ENCODE measurements at regions of chrX and their contacts with region 1.

Region 1: GRCh38 chrX:103686199-103687072 is at the start of gene MORF4L2:
- DNase-seq: peak; percentile 69 to 96 (median 84)
- ATAC-seq: peak; percentile 81
- H3K4me3 ChIP-seq: peak within 1 kb of the TSS; percentile 88 to 90
- H3K4me3 Mint-ChIP-seq: peak within 1 kb of the TSS; percentile 80
- H3K27ac ChIP-seq: peak within 1 kb of the TSS; percentile 99 to 100
- H3K27ac Mint-ChIP-seq: peak within 1 kb of the TSS; percentile 76
- H3K4me1 ChIP-seq: peaks cover 18% of the 10 kb centered on the region
- H3K4me1 Mint-ChIP-seq: peaks cover 19% of the 10 kb centered on the region
- H3K27me3 ChIP-seq: no peaks in the 10 kb centered on the region
- H3K27me3 Mint-ChIP-seq: no peaks in the 10 kb centered on the region
- CTCF ChIP-seq: no peak
- total RNA-seq, gene MORF4L2: 203 to 204 TPM

Region 2: GRCh38 chrX:103214870-103215424 is 471.5 kb before region 1 on chrX and contains the start of gene BEX4:
- CTCF ChIA-PET with region 1: no interaction called
- POLR2A ChIA-PET with region 1: no interaction called
- intact Hi-C with region 1: loop called in 1 of 2 experiments (anchors 5 kb)
- DNase-seq: peak; percentile 68 to 89 (median 80)
- ATAC-seq: peak; percentile 90
- H3K4me3 ChIP-seq: peak within 1 kb of the TSS; percentile 63 to 68
- H3K4me3 Mint-ChIP-seq: peak within 1 kb of the TSS; percentile 87
- H3K27ac ChIP-seq: peak within 1 kb of the TSS; percentile 84 to 96
- H3K27ac Mint-ChIP-seq: peak within 1 kb of the TSS; percentile 93
- H3K4me1 ChIP-seq: peaks cover 8% of the 10 kb centered on the region
- H3K4me1 Mint-ChIP-seq: peaks cover 16% of the 10 kb centered on the region
- H3K27me3 ChIP-seq: no peaks in the 10 kb centered on the region
- H3K27me3 Mint-ChIP-seq: no peaks in the 10 kb centered on the region
- CTCF ChIP-seq: no peak
- total RNA-seq, gene BEX4: 50.6 to 54.3 TPM

Region 3: GRCh38 chrX:103310542-103311398 is 375.7 kb before region 1 on chrX and contains the start of gene BEX2:
- CTCF ChIA-PET with region 1: no interaction called
- POLR2A ChIA-PET with region 1: no interaction called
- intact Hi-C with region 1: loop called (anchors 5 to 10 kb)
- DNase-seq: peak; percentile 70 to 91 (median 82)
- ATAC-seq: peak; percentile 98
- H3K4me3 ChIP-seq: peak within 1 kb of the TSS; percentile 55 to 84
- H3K4me3 Mint-ChIP-seq: peak within 1 kb of the TSS; percentile 85
- H3K27ac ChIP-seq: peak within 1 kb of the TSS; percentile 69 to 91
- H3K27ac Mint-ChIP-seq: peak within 1 kb of the TSS; percentile 86
- H3K4me1 ChIP-seq: no peaks in the 10 kb centered on the region
- H3K4me1 Mint-ChIP-seq: peaks cover 8% of the 10 kb centered on the region
- H3K27me3 ChIP-seq: no peaks in the 10 kb centered on the region
- H3K27me3 Mint-ChIP-seq: no peaks in the 10 kb centered on the region
- CTCF ChIP-seq: no peak
- total RNA-seq, gene BEX2: 57.6 to 59.3 TPM

Region 4: GRCh38 chrX:103554687-103555424 is 131.6 kb before region 1 on chrX:
- CTCF ChIA-PET with region 1: no interaction called
- POLR2A ChIA-PET with region 1: no interaction called
- intact Hi-C with region 1: loop called in 1 of 2 experiments (anchors 5 kb)
- DNase-seq: peak; percentile 26 to 85 (median 65)
- ATAC-seq: peak; percentile 85
- H3K4me3 ChIP-seq: peak overlapping the region; percentile 54 to 70
- H3K4me3 Mint-ChIP-seq: peak overlapping the region; percentile 89
- H3K27ac ChIP-seq: peak overlapping the region; percentile 21 to 60
- H3K27ac Mint-ChIP-seq: peak overlapping the region; percentile 92
- H3K4me1 ChIP-seq: peaks cover 5% of the 10 kb centered on the region
- H3K4me1 Mint-ChIP-seq: peaks cover 8% of the 10 kb centered on the region
- H3K27me3 ChIP-seq: no peaks in the 10 kb centered on the region
- H3K27me3 Mint-ChIP-seq: peaks cover 2% of the 10 kb centered on the region
- CTCF ChIP-seq: no peak

Region 5: GRCh38 chrX:103629318-103630170 is 56.9 kb before region 1 on chrX:
- CTCF ChIA-PET with region 1: no interaction called
- POLR2A ChIA-PET with region 1: no interaction called
- intact Hi-C with region 1: loop called in 1 of 2 experiments (anchors 2 kb)
- DNase-seq: peak in 6 of 9 experiments; percentile 1 to 43 (median 23)
- ATAC-seq: peak; percentile 49
- H3K4me3 ChIP-seq: peak overlapping the region; percentile 77 to 78
- H3K4me3 Mint-ChIP-seq: peak overlapping the region; percentile 91
- H3K27ac ChIP-seq: peak overlapping the region; percentile 66 to 77
- H3K27ac Mint-ChIP-seq: peak overlapping the region; percentile 95
- H3K4me1 ChIP-seq: peaks cover 3% of the 10 kb centered on the region
- H3K4me1 Mint-ChIP-seq: peaks cover 13% of the 10 kb centered on the region
- H3K27me3 ChIP-seq: no peaks in the 10 kb centered on the region
- H3K27me3 Mint-ChIP-seq: no peaks in the 10 kb centered on the region
- CTCF ChIP-seq: no peak

Region 6: GRCh38 chrX:103918581-103919269 is 232.3 kb after region 1 on chrX:
- CTCF ChIA-PET with region 1: no interaction called
- POLR2A ChIA-PET with region 1: no interaction called
- intact Hi-C with region 1: loop called in 1 of 2 experiments (anchors 1 kb)
- DNase-seq: peak; percentile 5 to 77 (median 48)
- ATAC-seq: peak; percentile 74
- H3K4me3 ChIP-seq: peak overlapping the region; percentile 62 to 71
- H3K4me3 Mint-ChIP-seq: peak overlapping the region; percentile 90
- H3K27ac ChIP-seq: peak overlapping the region; percentile 65 to 76
- H3K27ac Mint-ChIP-seq: peak overlapping the region; percentile 90
- H3K4me1 ChIP-seq: peaks cover 12% of the 10 kb centered on the region
- H3K4me1 Mint-ChIP-seq: peaks cover 29% of the 10 kb centered on the region
- H3K27me3 ChIP-seq: no peaks in the 10 kb centered on the region
- H3K27me3 Mint-ChIP-seq: no peaks in the 10 kb centered on the region
- CTCF ChIP-seq: no peak

Region 7: GRCh38 chrX:104156630-104157529 is 470.4 kb after region 1 on chrX and contains the start of gene SLC25A53:
- CTCF ChIA-PET with region 1: no interaction called
- POLR2A ChIA-PET with region 1: interaction called, 7 read pairs
- intact Hi-C with region 1: loop called in 1 of 2 experiments (anchors 5 kb)
- DNase-seq: peak; percentile 55 to 91 (median 71)
- ATAC-seq: peak; percentile 81
- H3K4me3 ChIP-seq: peak within 1 kb of the TSS; percentile 62 to 75
- H3K4me3 Mint-ChIP-seq: peak within 1 kb of the TSS; percentile 97
- H3K27ac ChIP-seq: peak within 1 kb of the TSS; percentile 88 to 92
- H3K27ac Mint-ChIP-seq: peak within 1 kb of the TSS; percentile 100
- H3K4me1 ChIP-seq: peaks cover 10% of the 10 kb centered on the region
- H3K4me1 Mint-ChIP-seq: peaks cover 27% of the 10 kb centered on the region
- H3K27me3 ChIP-seq: no peaks in the 10 kb centered on the region
- H3K27me3 Mint-ChIP-seq: no peaks in the 10 kb centered on the region
- CTCF ChIP-seq: no peak
- total RNA-seq, gene SLC25A53: 7.9 to 8.9 TPM

Region 8: GRCh38 chrX:104618106-104618895 is 931.9 kb after region 1 on chrX:
- CTCF ChIA-PET with region 1: no interaction called
- POLR2A ChIA-PET with region 1: no interaction called
- intact Hi-C with region 1: no loop called
- DNase-seq: no peak
- ATAC-seq: no peak
- H3K4me3 ChIP-seq: no peak overlapping the region
- H3K4me3 Mint-ChIP-seq: no peak overlapping the region
- H3K27ac ChIP-seq: no peak overlapping the region
- H3K27ac Mint-ChIP-seq: no peak overlapping the region
- H3K4me1 ChIP-seq: no peaks in the 10 kb centered on the region
- H3K4me1 Mint-ChIP-seq: no peaks in the 10 kb centered on the region
- H3K27me3 ChIP-seq: no peaks in the 10 kb centered on the region
- H3K27me3 Mint-ChIP-seq: no peaks in the 10 kb centered on the region
- CTCF ChIP-seq: no peak